Caki2 (cell line): ENCODE measurements at regions of chr21 and their contacts with region 1.

Region 1: GRCh38 chr21:33712022-33712803 is 69.9 kb downstream of the ITSN1 start:
- DNase-seq: no peak

Region 2: DNA sequence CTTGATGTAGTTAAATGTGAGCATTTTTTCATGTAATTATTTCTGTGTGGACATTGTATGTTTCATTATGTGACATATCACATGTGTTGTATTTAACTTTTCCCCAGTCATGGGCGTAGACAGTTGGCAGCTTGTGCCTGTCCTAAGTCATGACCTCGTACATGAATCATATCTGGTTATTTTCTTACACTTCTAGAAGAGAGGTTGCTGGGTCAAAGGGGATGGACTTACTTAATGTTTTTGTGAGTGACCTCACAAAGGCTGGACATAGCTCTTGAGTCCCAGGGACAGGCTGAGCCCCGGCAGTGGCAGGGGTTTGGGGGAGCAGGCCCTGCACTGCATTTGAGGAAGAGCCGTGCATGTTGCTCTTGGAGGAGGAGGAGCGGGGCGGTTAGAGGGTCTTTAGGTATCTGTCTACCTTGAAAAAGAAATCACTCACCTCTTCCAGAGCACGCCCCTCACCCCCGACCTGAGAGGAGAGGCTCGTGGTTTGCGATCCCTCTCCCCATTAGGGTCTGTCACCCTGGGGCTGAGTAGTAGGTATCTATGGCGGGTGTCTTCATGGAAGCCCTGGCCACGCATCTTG is 292.6 kb before region 1 on chr21:
- in situ Hi-C with region 1: no loop called
- DNase-seq: peak; percentile 82

Region 3: DNA sequence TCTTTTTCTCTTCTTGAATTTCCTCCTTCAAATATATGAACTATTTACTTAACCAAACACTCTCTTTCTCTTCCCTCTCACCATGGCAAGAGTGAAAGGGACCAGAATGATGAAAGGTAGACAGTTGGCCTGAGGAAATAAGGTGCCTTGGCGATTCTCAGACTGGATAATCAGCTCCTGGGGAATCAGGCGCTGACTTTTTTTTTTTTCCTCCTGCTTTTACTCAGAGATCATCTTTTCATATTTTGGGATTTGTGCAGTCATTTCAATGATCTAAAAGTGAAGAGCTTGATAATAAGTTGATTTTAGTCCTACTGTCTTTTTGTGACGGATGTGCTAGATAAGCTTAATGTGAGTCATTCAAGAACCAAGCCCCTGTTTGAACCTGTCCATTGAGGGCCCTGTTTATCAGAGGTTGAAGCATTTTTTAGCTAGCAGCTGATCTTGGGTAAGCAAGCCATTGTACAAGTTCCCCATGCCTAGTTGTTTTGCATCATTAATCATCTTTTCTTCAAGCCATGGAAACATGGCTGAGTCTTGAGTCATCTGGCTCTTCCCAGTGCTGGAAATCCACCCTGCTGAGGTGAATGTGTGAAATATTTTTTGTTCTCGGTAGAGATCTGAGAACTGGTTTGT is 29.1 kb before region 1 on chr21:
- in situ Hi-C with region 1: loop called (anchors 5 kb)
- DNase-seq: peak; percentile 90

Region 4: GRCh38 chr21:33866826-33867225 is 154.6 kb after region 1 on chr21:
- in situ Hi-C with region 1: no loop called
- DNase-seq: no peak